CD8-positive, alpha-beta T cell (primary cell): ENCODE measurements at regions of chr12 and their contacts with region 1.

Region 1: GRCh38 chr12:92041742-92042141 is 103.9 kb downstream of the BTG1 start:
- DNase-seq: peak in 5 of 9 experiments; percentile 24 to 62 (median 36)
- ATAC-seq: peak; percentile 90
- H3K4me3 ChIP-seq: no peak overlapping the region
- H3K4me3 Mint-ChIP-seq: peak overlapping the region; percentile 59
- H3K27ac ChIP-seq: no peak overlapping the region
- H3K27ac Mint-ChIP-seq: peak overlapping the region; percentile 85
- H3K4me1 ChIP-seq: peaks cover 58% of the 10 kb centered on the region
- H3K4me1 Mint-ChIP-seq: peaks cover 75% of the 10 kb centered on the region
- H3K27me3 ChIP-seq: no peaks in the 10 kb centered on the region
- H3K27me3 Mint-ChIP-seq: no peaks in the 10 kb centered on the region
- CTCF ChIP-seq: peak; percentile 26

Region 2: GRCh38 chr12:92000597-92000996 is 41.1 kb before region 1 on chr12:
- CTCF ChIA-PET with region 1: no interaction called
- POLR2A ChIA-PET with region 1: no interaction called
- intact Hi-C with region 1: no loop called
- DNase-seq: peak in 2 of 9 experiments; percentile 65 to 73
- ATAC-seq: peak; percentile 38
- H3K4me3 ChIP-seq: no peak overlapping the region
- H3K4me3 Mint-ChIP-seq: no peak overlapping the region
- H3K27ac ChIP-seq: no peak overlapping the region
- H3K27ac Mint-ChIP-seq: peak overlapping the region; percentile 27
- H3K4me1 ChIP-seq: peaks cover 12% of the 10 kb centered on the region
- H3K4me1 Mint-ChIP-seq: peaks cover 52% of the 10 kb centered on the region
- H3K27me3 ChIP-seq: no peaks in the 10 kb centered on the region
- H3K27me3 Mint-ChIP-seq: no peaks in the 10 kb centered on the region
- CTCF ChIP-seq: no peak

Region 3: DNA sequence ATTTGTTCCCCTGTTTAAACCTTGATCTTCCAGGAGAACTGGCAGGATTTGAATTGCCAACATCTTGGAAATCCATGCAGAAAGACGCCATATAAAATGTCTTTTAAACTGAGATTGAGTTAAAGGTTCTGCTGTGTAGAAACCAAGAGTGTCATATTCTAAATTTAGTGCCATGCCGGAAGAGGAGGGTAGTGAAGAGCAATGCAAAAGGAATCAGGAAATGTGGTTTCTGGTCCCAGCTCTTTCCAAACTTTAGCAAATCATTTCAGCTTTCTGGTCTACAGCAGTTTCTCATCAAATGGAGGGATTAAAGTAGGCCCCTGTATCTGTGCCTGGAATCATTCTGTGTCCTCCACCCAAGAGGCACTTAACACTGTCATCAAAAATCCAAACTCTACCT is 18.2 kb after region 1 on chr12:
- CTCF ChIA-PET with region 1: interaction called, 8 read pairs
- POLR2A ChIA-PET with region 1: interaction called, 5 read pairs
- intact Hi-C with region 1: loop called (anchors 2 kb)
- DNase-seq: no peak
- ATAC-seq: no peak
- H3K4me3 ChIP-seq: no peak overlapping the region
- H3K4me3 Mint-ChIP-seq: no peak overlapping the region
- H3K27ac ChIP-seq: no peak overlapping the region
- H3K27ac Mint-ChIP-seq: peak overlapping the region; percentile 6
- H3K4me1 ChIP-seq: peaks cover 41% of the 10 kb centered on the region
- H3K4me1 Mint-ChIP-seq: peaks cover 79% of the 10 kb centered on the region
- H3K27me3 ChIP-seq: no peaks in the 10 kb centered on the region
- H3K27me3 Mint-ChIP-seq: no peaks in the 10 kb centered on the region
- CTCF ChIP-seq: no peak

Region 4: GRCh38 chr12:92075425-92075914 is 33.7 kb after region 1 on chr12:
- CTCF ChIA-PET with region 1: no interaction called
- POLR2A ChIA-PET with region 1: no interaction called
- intact Hi-C with region 1: no loop called
- DNase-seq: no peak
- ATAC-seq: no peak
- H3K4me3 ChIP-seq: no peak overlapping the region
- H3K4me3 Mint-ChIP-seq: no peak overlapping the region
- H3K27ac ChIP-seq: no peak overlapping the region
- H3K27ac Mint-ChIP-seq: no peak overlapping the region
- H3K4me1 ChIP-seq: peaks cover 31% of the 10 kb centered on the region
- H3K4me1 Mint-ChIP-seq: peaks cover 54% of the 10 kb centered on the region
- H3K27me3 ChIP-seq: no peaks in the 10 kb centered on the region
- H3K27me3 Mint-ChIP-seq: no peaks in the 10 kb centered on the region
- CTCF ChIP-seq: no peak

Region 5: DNA sequence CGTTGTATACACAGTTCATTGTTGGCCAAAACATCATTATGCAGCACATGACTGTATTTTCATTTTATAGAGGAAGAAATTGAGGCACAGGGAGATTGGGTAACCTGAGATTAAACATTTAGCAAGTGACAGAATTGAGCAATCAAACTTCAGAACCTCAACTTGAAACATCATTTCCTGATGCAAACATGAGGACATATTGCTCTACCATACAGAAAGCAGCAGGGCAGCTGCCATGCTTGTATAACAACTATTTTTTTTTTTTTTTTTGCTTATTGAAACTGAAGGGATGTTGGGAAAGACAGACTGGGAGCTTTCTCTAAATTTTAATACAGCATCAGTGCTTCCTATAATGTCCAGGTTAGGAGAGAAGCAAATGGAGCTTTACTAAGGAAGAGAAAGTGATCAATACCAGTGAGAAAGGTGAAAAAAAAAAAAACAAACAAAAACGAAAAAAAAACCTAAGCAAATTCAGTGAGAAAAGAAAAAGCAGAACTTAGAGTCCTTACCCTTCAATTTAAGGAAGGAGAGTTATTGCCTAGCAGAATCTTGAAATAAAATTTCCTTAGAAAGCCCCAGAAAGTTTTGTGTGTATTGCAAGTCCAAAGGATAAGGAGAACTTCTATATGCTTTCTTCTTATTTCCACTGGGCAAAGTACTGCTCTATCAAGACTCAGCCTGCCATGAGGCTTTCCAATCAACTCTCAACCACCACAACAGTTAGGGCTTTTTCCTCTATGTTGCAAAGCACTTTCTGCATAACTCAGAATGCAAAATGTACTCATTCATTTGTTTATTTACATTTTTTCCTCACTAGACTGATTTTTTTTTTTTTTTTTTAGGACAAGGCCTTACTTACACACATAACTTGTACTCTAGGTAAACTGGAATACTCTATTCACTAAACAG is 82.3 kb after region 1 on chr12:
- CTCF ChIA-PET with region 1: no interaction called
- POLR2A ChIA-PET with region 1: no interaction called
- intact Hi-C with region 1: no loop called
- DNase-seq: no peak
- ATAC-seq: no peak
- H3K4me3 ChIP-seq: no peak overlapping the region
- H3K4me3 Mint-ChIP-seq: peak overlapping the region; percentile 45
- H3K27ac ChIP-seq: no peak overlapping the region
- H3K27ac Mint-ChIP-seq: peak overlapping the region; percentile 61
- H3K4me1 ChIP-seq: peaks cover 47% of the 10 kb centered on the region
- H3K4me1 Mint-ChIP-seq: peaks cover 55% of the 10 kb centered on the region
- H3K27me3 ChIP-seq: no peaks in the 10 kb centered on the region
- H3K27me3 Mint-ChIP-seq: no peaks in the 10 kb centered on the region
- CTCF ChIP-seq: no peak